Caco-2 (cell line): ENCODE measurements at regions of chr11 and their contacts with region 1.

Region 1: GRCh38 chr11:113896156-113896879 is 8.3 kb upstream of the HTR3B start:
- DNase-seq: peak in 1 of 2 experiments; percentile 55
- H3K4me3 ChIP-seq: no peak overlapping the region
- H3K4me3 Mint-ChIP-seq: no peak overlapping the region
- H3K27ac Mint-ChIP-seq: no peak overlapping the region
- H3K4me1 ChIP-seq: no peaks in the 10 kb centered on the region
- H3K4me1 Mint-ChIP-seq: peaks cover 7% of the 10 kb centered on the region
- H3K27me3 ChIP-seq: no peaks in the 10 kb centered on the region
- H3K27me3 Mint-ChIP-seq: peaks cover 3% of the 10 kb centered on the region
- CTCF ChIP-seq: peak; percentile 93

Region 2: GRCh38 chr11:113865873-113866272 is 30.4 kb before region 1 on chr11:
- CTCF ChIA-PET with region 1: no interaction called
- POLR2A ChIA-PET with region 1: no interaction called
- intact Hi-C with region 1: no loop called
- DNase-seq: no peak
- H3K4me3 ChIP-seq: no peak overlapping the region
- H3K4me3 Mint-ChIP-seq: no peak overlapping the region
- H3K27ac Mint-ChIP-seq: no peak overlapping the region
- H3K4me1 ChIP-seq: peaks cover 8% of the 10 kb centered on the region; the same call in 1 of the 2 replicates
- H3K4me1 Mint-ChIP-seq: peaks cover 14% of the 10 kb centered on the region
- H3K27me3 ChIP-seq: no peaks in the 10 kb centered on the region
- H3K27me3 Mint-ChIP-seq: no peaks in the 10 kb centered on the region
- CTCF ChIP-seq: no peak

Region 3: GRCh38 chr11:113974741-113975470 is 78.6 kb after region 1 on chr11 and contains the start of gene HTR3A:
- CTCF ChIA-PET with region 1: interaction called, 5 read pairs
- POLR2A ChIA-PET with region 1: no interaction called
- intact Hi-C with region 1: loop called (anchors 5 kb)
- DNase-seq: peak in 1 of 2 experiments; percentile 27
- H3K4me3 ChIP-seq: no peak within 1 kb of the TSS
- H3K4me3 Mint-ChIP-seq: no peak within 1 kb of the TSS
- H3K27ac Mint-ChIP-seq: no peak within 1 kb of the TSS
- H3K4me1 ChIP-seq: no peaks in the 10 kb centered on the region
- H3K4me1 Mint-ChIP-seq: no peaks in the 10 kb centered on the region
- H3K27me3 ChIP-seq: peaks cover 2% of the 10 kb centered on the region
- H3K27me3 Mint-ChIP-seq: peaks cover 27% of the 10 kb centered on the region
- CTCF ChIP-seq: no peak
- total RNA-seq, gene HTR3A: not detected in 2 replicates

Region 4: GRCh38 chr11:114026355-114026754 is 130.0 kb after region 1 on chr11:
- CTCF ChIA-PET with region 1: no interaction called
- POLR2A ChIA-PET with region 1: no interaction called
- intact Hi-C with region 1: loop called (anchors 5 kb)
- DNase-seq: peak in 1 of 2 experiments; percentile 53
- H3K4me3 ChIP-seq: no peak overlapping the region
- H3K4me3 Mint-ChIP-seq: no peak overlapping the region
- H3K27ac Mint-ChIP-seq: no peak overlapping the region
- H3K4me1 ChIP-seq: peaks cover 8% of the 10 kb centered on the region
- H3K4me1 Mint-ChIP-seq: peaks cover 9% of the 10 kb centered on the region
- H3K27me3 ChIP-seq: peaks cover 1% of the 10 kb centered on the region
- H3K27me3 Mint-ChIP-seq: peaks cover 2% of the 10 kb centered on the region
- CTCF ChIP-seq: peak; percentile 62 to 76

Region 5: GRCh38 chr11:114257621-114258558 is 361.6 kb after region 1 on chr11:
- CTCF ChIA-PET with region 1: interaction called, 86 read pairs
- POLR2A ChIA-PET with region 1: no interaction called
- intact Hi-C with region 1: loop called (anchors 1 kb)
- DNase-seq: peak; percentile 51 to 61
- H3K4me3 ChIP-seq: no peak overlapping the region
- H3K4me3 Mint-ChIP-seq: no peak overlapping the region
- H3K27ac Mint-ChIP-seq: no peak overlapping the region
- H3K4me1 ChIP-seq: peaks cover 17% of the 10 kb centered on the region
- H3K4me1 Mint-ChIP-seq: peaks cover 7% of the 10 kb centered on the region
- H3K27me3 ChIP-seq: no peaks in the 10 kb centered on the region
- H3K27me3 Mint-ChIP-seq: no peaks in the 10 kb centered on the region
- CTCF ChIP-seq: peak in 1 of 2 experiments; percentile 53